Activated CD4-positive, alpha-beta T cell treated with anti-CD3 and anti-CD28 coated beads for 36 hours (primary cell): ENCODE measurements at regions of chr11 and their contacts with region 1.

Region 1: GRCh38 chr11:36165621-36166397 is 123.4 kb downstream of the COMMD9 start:
- DNase-seq: no peak
- ATAC-seq: no peak
- H3K4me3 Mint-ChIP-seq: no peak overlapping the region
- H3K27ac Mint-ChIP-seq: no peak overlapping the region
- H3K4me1 Mint-ChIP-seq: no peaks in the 10 kb centered on the region
- H3K27me3 Mint-ChIP-seq: peaks cover 11% of the 10 kb centered on the region

Region 2: DNA sequence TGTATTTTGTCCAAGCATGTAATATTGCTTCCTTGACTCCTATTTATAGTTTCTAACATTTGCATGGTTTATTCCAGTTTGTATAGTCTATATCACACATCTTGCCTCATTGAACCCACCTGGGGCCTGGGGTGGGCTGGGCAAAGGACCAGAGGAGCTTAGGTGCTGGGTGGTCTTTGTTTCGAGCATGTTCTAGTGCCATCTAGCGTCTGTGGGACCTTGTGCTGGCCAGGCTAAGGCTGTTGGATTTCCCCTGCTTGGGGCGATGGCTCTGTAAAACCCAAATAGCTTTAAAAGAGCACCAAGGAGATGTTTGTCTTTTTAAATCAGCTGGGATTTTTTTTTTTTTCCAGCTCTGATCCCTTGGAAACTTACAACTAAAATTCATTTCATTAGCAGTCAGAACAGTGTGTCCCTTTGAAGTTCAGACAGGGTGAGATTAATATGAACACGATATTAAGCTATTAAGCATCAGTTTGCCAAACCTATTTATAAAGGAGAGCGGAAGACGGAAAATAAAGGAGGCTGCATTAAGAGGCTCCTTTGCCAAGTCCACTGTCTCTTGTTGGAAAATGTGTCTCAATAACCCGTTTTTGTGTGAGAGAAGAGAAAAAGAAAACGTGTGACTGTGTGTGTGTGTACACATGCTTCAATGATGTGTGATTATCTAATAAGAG is 34.0 kb before region 1 on chr11:
- CTCF ChIA-PET with region 1: no interaction called
- POLR2A ChIA-PET with region 1: no interaction called
- intact Hi-C with region 1: loop called in 1 of 2 experiments (anchors 5 kb)
- DNase-seq: peak; percentile 17
- ATAC-seq: no peak
- H3K4me3 Mint-ChIP-seq: no peak overlapping the region
- H3K27ac Mint-ChIP-seq: no peak overlapping the region
- H3K4me1 Mint-ChIP-seq: no peaks in the 10 kb centered on the region
- H3K27me3 Mint-ChIP-seq: peaks cover 8% of the 10 kb centered on the region